CD4-positive, alpha-beta T cell (primary cell): ENCODE measurements at regions of chr6 and their contacts with region 1.

Region 1: GRCh38 chr6:90274451-90275030 is 22.1 kb downstream of the BACH2 start:
- DNase-seq: peak; percentile 80 to 98 (median 86)
- ATAC-seq: peak; percentile 89
- H3K4me3 ChIP-seq: peak overlapping the region; percentile 5
- H3K4me3 Mint-ChIP-seq: peak overlapping the region; percentile 71
- H3K27ac ChIP-seq: peak overlapping the region; percentile 75 to 90
- H3K27ac Mint-ChIP-seq: peak overlapping the region; percentile 97
- H3K4me1 ChIP-seq: peaks cover 39% of the 10 kb centered on the region
- H3K4me1 Mint-ChIP-seq: peaks cover 89% of the 10 kb centered on the region
- H3K27me3 ChIP-seq: no peaks in the 10 kb centered on the region
- H3K27me3 Mint-ChIP-seq: no peaks in the 10 kb centered on the region
- CTCF ChIP-seq: peak; percentile 30

Region 2: GRCh38 chr6:88339761-88340160 is 1934.8 kb before region 1 on chr6:
- CTCF ChIA-PET with region 1: no interaction called
- POLR2A ChIA-PET with region 1: no interaction called
- intact Hi-C with region 1: no loop called
- DNase-seq: no peak
- ATAC-seq: no peak
- H3K4me3 ChIP-seq: no peak overlapping the region
- H3K4me3 Mint-ChIP-seq: no peak overlapping the region
- H3K27ac ChIP-seq: no peak overlapping the region
- H3K27ac Mint-ChIP-seq: no peak overlapping the region
- H3K4me1 ChIP-seq: no peaks in the 10 kb centered on the region
- H3K4me1 Mint-ChIP-seq: no peaks in the 10 kb centered on the region
- H3K27me3 ChIP-seq: no peaks in the 10 kb centered on the region
- H3K27me3 Mint-ChIP-seq: no peaks in the 10 kb centered on the region
- CTCF ChIP-seq: no peak

Region 3: DNA sequence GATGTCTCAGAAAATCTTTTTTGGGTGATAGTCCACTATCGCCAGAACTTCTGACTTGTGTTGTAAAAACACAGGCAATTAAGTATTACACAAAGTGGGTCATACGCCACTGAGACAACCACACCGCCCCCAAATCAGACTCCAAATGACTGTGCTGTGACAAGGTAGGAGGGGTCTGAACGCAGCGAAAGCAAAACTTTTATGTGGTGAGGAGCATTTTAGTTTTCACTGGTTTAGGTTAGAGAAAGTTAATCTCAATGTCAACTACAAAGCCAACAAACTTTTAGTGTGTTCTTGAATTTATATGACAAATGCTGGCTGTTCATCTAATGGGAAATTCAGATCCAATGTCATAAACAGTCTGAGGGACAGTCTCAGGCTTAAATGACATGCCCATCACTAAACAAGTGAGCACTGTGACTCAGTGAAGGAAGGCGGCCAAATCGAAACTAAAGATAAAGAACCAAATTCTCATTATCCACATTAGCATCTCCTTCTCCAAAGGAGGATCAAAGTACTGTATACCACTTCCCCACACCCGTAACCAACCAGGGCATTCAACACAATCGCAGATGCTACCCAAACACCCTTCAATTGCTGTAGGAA is 193.6 kb before region 1 on chr6:
- CTCF ChIA-PET with region 1: no interaction called
- POLR2A ChIA-PET with region 1: interaction called, 7 read pairs
- intact Hi-C with region 1: loop called in 1 of 2 experiments (anchors 2 kb)
- DNase-seq: peak; percentile 31 to 85 (median 54)
- ATAC-seq: peak; percentile 80
- H3K4me3 ChIP-seq: peak overlapping the region; percentile 52
- H3K4me3 Mint-ChIP-seq: peak overlapping the region; percentile 93
- H3K27ac ChIP-seq: peak overlapping the region; percentile 57 to 68
- H3K27ac Mint-ChIP-seq: peak overlapping the region; percentile 92
- H3K4me1 ChIP-seq: peaks cover 35% of the 10 kb centered on the region
- H3K4me1 Mint-ChIP-seq: peaks cover 98% of the 10 kb centered on the region
- H3K27me3 ChIP-seq: no peaks in the 10 kb centered on the region
- H3K27me3 Mint-ChIP-seq: no peaks in the 10 kb centered on the region
- CTCF ChIP-seq: no peak

Region 4: GRCh38 chr6:90160013-90160412 is 114.5 kb before region 1 on chr6:
- CTCF ChIA-PET with region 1: no interaction called
- POLR2A ChIA-PET with region 1: interaction called, 12 read pairs
- intact Hi-C with region 1: no loop called
- DNase-seq: no peak
- ATAC-seq: peak; percentile 25
- H3K4me3 ChIP-seq: no peak overlapping the region
- H3K4me3 Mint-ChIP-seq: peak overlapping the region; percentile 27
- H3K27ac ChIP-seq: peak overlapping the region in 1 of 2 donors; percentile 9
- H3K27ac Mint-ChIP-seq: peak overlapping the region; percentile 84
- H3K4me1 ChIP-seq: peaks cover 34% of the 10 kb centered on the region
- H3K4me1 Mint-ChIP-seq: peaks cover 75% of the 10 kb centered on the region
- H3K27me3 ChIP-seq: no peaks in the 10 kb centered on the region
- H3K27me3 Mint-ChIP-seq: no peaks in the 10 kb centered on the region
- CTCF ChIP-seq: no peak

Region 5: GRCh38 chr6:90241229-90241880 is 33.2 kb before region 1 on chr6:
- CTCF ChIA-PET with region 1: interaction called, 9 read pairs
- POLR2A ChIA-PET with region 1: interaction called, 10 read pairs
- intact Hi-C with region 1: no loop called
- DNase-seq: peak in 2 of 14 experiments; percentile 29 to 42
- ATAC-seq: no peak
- H3K4me3 ChIP-seq: no peak overlapping the region
- H3K4me3 Mint-ChIP-seq: peak overlapping the region; percentile 30
- H3K27ac ChIP-seq: peak overlapping the region in 1 of 2 donors; percentile 21
- H3K27ac Mint-ChIP-seq: peak overlapping the region; percentile 60
- H3K4me1 ChIP-seq: peaks cover 25% of the 10 kb centered on the region
- H3K4me1 Mint-ChIP-seq: peaks cover 74% of the 10 kb centered on the region
- H3K27me3 ChIP-seq: no peaks in the 10 kb centered on the region
- H3K27me3 Mint-ChIP-seq: no peaks in the 10 kb centered on the region
- CTCF ChIP-seq: no peak

Region 6: DNA sequence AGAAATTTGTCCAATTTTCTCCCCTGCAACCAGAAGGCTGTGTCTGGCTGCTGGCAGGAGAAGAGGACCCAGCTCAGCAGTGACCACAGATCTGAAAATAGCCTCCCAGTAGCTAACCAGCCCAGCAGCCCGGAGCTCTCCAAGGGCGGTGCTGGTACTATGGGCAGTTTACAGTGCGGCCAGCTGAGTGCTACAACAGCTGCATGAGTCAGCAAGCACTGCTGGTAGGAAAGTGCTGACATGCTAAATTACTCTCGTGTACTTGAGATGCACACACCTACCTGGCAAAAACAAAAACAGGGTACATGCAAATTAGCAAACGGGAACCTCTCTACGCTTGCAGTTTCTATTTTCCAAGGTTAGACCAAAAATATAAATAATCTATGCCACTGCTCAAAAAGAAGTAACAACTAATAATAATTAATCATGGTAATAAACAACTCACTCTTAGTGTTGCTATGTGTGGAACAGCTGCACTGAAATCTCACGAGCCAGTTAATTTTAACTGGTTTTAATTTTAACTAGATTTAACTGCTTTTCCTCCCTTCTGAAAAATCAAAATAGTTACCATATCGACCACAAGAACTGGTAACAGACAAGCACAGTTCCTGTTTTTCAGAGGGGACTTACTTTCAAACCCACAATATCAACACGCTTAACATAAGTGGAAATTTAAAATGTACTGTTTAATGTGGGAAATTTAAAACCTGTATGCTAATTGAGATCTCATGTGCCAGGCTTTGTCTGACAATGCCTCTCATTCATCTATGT is 11.3 kb after region 1 on chr6:
- CTCF ChIA-PET with region 1: interaction called, 26 read pairs
- POLR2A ChIA-PET with region 1: interaction called, 91 read pairs
- intact Hi-C with region 1: loop called in 1 of 2 experiments (anchors 1 kb)
- DNase-seq: peak in 11 of 14 experiments; percentile 21 to 79 (median 45)
- ATAC-seq: peak; percentile 47
- H3K4me3 ChIP-seq: peak overlapping the region; percentile 54
- H3K4me3 Mint-ChIP-seq: peak overlapping the region; percentile 83
- H3K27ac ChIP-seq: peak overlapping the region; percentile 12 to 80
- H3K27ac Mint-ChIP-seq: peak overlapping the region; percentile 91
- H3K4me1 ChIP-seq: peaks cover 38% of the 10 kb centered on the region
- H3K4me1 Mint-ChIP-seq: peaks cover 93% of the 10 kb centered on the region
- H3K27me3 ChIP-seq: no peaks in the 10 kb centered on the region
- H3K27me3 Mint-ChIP-seq: no peaks in the 10 kb centered on the region
- CTCF ChIP-seq: no peak